Activated B cell treated with CpG ODN at 0.5 μM for 24 hours (primary cell): ENCODE measurements at regions of chrX and their contacts with region 1.

Region 1: DNA sequence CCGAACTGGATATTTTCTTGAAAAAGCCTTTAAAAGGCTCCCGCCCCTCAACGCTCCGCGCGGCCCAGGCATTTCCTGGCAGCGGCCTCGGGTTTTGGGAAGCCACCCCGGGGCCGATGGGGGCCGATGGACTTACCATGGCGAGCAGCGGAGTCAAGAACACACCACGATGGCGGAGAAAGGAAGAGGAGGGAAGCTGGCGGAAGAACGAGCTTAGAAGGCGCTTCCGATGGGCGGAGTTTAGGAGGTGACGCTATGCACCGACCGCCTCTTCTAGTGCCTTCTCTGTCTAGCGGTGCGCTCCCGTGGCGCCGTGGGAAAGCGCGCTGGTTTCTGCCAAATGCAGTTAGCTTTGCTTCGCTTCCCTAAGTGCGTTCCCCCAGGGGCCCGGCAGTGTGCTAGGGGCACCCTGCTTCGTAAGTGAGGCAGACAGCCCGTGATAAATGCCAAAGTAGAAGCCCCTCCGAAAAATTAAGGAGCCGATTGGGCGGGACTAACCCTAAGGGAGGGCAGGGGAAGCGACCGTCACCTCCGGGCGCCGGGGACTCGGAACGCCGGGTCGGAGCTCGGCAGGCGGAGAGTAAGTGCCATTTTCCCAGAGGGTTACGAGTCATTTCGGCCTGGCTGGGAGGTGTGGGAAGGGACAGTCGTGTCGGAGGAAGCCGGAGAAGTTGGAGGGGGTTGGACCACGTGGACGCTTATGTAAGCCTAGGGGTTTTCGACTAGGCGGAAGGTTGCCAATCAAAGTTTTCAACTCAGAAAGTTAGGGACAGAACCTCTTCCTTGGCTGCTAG is at the start of gene RPL39:
- DNase-seq: peak; percentile 69
- ATAC-seq: peak; percentile 90
- H3K4me3 Mint-ChIP-seq: peak within 1 kb of the TSS; percentile 95
- H3K27ac Mint-ChIP-seq: peak within 1 kb of the TSS; percentile 96
- H3K4me1 Mint-ChIP-seq: peaks cover 37% of the 10 kb centered on the region
- H3K27me3 Mint-ChIP-seq: no peaks in the 10 kb centered on the region
- CTCF ChIP-seq: no peak
- total RNA-seq, gene RPL39: 3,684 and 4,270 TPM in 2 replicates

Region 2: DNA sequence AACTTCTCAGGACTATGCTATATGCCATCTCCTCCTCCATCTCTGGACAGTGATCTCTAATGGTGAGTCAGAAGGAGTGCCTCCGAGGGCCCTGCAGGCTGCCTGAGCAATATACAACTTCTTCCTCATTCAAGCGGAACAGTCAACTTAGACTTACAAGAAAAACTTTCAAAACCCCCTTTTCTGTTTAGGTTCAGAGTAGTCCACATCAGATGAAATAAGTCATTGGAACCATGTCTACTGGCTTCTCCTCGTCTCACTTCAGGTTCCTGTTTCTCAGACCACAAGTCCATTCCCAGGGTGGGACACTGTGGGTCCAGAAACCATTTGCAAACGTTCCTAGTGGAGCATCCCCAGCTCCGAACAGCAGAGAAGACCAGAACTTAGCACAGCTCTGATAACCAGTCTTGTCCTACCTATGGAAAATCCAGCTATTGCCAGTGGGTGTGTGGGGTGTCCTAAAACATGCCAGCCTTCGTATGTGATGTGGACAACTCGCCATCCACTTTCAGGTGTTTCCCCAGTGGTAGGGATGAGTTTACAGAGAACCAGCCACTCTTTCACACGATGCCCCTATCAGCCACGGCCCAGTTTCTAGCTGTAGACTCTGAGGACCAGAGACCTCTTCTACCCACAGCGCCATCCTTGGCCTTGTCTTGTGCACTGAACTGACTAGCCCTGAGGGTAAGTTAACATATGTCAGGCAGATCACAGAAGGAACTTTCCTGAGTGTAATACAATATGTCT is 152.7 kb before region 1 on chrX:
- CTCF ChIA-PET with region 1: no interaction called
- POLR2A ChIA-PET with region 1: interaction called, 10 read pairs
- intact Hi-C with region 1: no loop called
- DNase-seq: no peak
- ATAC-seq: peak; percentile 73
- H3K4me3 Mint-ChIP-seq: peak overlapping the region; percentile 56
- H3K27ac Mint-ChIP-seq: peak overlapping the region; percentile 93
- H3K4me1 Mint-ChIP-seq: peaks cover 62% of the 10 kb centered on the region
- H3K27me3 Mint-ChIP-seq: no peaks in the 10 kb centered on the region
- CTCF ChIP-seq: no peak

Region 3: DNA sequence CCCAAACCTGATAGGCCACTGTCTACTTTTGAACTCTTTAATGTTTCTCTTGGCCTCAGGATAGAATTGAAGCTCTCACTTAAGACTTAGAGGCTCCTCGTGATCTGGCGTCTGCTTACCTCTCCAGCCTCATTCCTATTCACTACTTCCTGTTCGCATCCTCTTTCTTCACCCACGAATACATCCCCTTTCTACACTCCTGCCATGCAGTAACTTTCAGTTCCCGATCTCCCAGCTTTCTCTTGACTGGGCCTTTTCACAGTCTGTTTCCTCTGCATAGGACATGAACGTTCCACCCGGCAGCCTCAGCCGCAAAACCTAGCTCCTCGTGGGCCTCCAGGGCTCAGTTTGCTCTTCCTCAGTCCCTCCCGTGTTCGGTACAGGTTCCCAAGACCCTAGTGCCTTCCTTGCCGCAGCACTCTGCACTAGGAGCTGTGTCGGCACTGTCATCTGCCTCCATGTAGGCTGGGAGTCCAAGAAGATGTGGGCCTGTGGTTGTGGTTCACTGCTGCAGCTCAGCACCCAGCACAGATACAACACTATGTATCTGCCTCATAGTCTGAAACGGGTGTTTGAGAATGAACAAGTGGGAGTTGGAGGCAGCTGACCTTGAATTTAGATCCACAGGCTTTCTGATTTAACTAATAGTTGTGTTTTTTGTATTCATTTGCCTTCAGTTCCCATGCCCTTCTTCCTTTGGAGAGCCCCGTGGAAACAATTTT is 16.0 kb before region 1 on chrX:
- CTCF ChIA-PET with region 1: no interaction called
- POLR2A ChIA-PET with region 1: interaction called, 11 read pairs
- intact Hi-C with region 1: no loop called
- DNase-seq: no peak
- ATAC-seq: peak; percentile 21
- H3K4me3 Mint-ChIP-seq: peak overlapping the region; percentile 28
- H3K27ac Mint-ChIP-seq: peak overlapping the region; percentile 85
- H3K4me1 Mint-ChIP-seq: peaks cover 27% of the 10 kb centered on the region
- H3K27me3 Mint-ChIP-seq: no peaks in the 10 kb centered on the region
- CTCF ChIP-seq: no peak

Region 4: DNA sequence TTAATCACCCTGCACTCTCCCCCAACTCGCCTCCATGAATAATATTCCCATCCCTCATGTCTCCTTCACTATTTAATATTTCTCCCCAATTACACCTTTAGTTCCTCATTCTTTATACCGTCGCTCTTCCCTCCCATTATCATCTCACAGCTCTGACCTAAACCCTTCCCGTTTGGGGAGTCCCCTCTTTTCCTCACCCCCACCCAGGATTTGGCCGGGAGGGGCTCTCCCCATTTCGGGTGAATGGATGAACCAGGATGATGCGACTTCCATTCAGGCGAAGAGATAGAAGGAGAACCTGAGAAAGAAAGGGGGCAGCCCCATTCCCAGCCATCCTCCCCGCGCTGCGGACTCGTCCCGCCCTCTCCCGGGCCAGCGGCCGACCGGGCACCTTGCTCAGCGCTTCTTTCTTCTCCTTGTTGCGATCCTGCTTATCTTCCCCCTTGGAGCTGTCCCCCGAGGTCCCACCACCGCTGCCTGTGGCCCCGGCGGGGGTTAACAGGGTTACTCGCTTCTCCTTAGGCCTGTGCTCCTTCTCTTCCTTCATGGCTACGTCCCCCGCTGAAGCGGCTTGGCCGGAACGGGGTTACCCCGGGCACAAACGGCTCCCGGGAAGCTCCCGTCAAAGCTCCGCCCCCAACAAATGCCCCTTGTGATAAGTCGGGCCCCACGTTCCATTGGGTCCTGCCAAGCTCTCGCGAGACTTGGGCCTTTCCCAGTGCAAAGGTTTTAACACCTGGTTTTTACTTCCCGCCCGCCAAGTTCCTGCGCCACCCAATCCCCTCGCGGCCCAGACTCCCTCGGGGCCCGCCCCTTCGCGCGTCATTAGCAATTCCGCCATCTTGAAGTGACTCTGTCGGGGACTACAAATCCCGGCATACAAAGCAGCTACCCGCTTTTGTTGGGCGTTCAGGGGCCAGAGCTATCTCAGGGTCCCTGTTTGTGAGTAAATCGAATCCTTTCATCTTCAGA is 61.0 kb after region 1 on chrX and contains the start of gene UPF3B:
- CTCF ChIA-PET with region 1: interaction called, 3 read pairs
- POLR2A ChIA-PET with region 1: interaction called, 20 read pairs
- intact Hi-C with region 1: loop called (anchors 1 kb)
- DNase-seq: peak; percentile 76
- ATAC-seq: peak; percentile 96
- H3K4me3 Mint-ChIP-seq: peak within 1 kb of the TSS; percentile 97
- H3K27ac Mint-ChIP-seq: peak within 1 kb of the TSS; percentile 96
- H3K4me1 Mint-ChIP-seq: peaks cover 12% of the 10 kb centered on the region
- H3K27me3 Mint-ChIP-seq: no peaks in the 10 kb centered on the region
- CTCF ChIP-seq: no peak
- total RNA-seq, gene UPF3B: 14.0 and 15.9 TPM in 2 replicates

Region 5: GRCh38 chrX:119880552-119881437 is 89.2 kb after region 1 on chrX:
- CTCF ChIA-PET with region 1: no interaction called
- POLR2A ChIA-PET with region 1: interaction called, 4 read pairs
- intact Hi-C with region 1: loop called (anchors 2 kb)
- DNase-seq: no peak
- ATAC-seq: peak; percentile 81
- H3K4me3 Mint-ChIP-seq: no peak overlapping the region
- H3K27ac Mint-ChIP-seq: no peak overlapping the region
- H3K4me1 Mint-ChIP-seq: peaks cover 13% of the 10 kb centered on the region
- H3K27me3 Mint-ChIP-seq: no peaks in the 10 kb centered on the region
- CTCF ChIP-seq: no peak

Region 6: GRCh38 chrX:119954374-119954773 is 162.7 kb after region 1 on chrX:
- CTCF ChIA-PET with region 1: no interaction called
- POLR2A ChIA-PET with region 1: no interaction called
- intact Hi-C with region 1: no loop called
- DNase-seq: no peak
- ATAC-seq: no peak
- H3K4me3 Mint-ChIP-seq: no peak overlapping the region
- H3K27ac Mint-ChIP-seq: no peak overlapping the region
- H3K4me1 Mint-ChIP-seq: no peaks in the 10 kb centered on the region
- H3K27me3 Mint-ChIP-seq: peaks cover 8% of the 10 kb centered on the region
- CTCF ChIP-seq: no peak